PC-9 (cell line): ENCODE measurements at regions of chr7 and their contacts with region 1.

Region 1: GRCh38 chr7:78472519-78472918 is 673.9 kb downstream of the PHTF2 start:
- DNase-seq: no peak
- H3K4me3 ChIP-seq: no peak overlapping the region
- H3K27ac ChIP-seq: no peak overlapping the region
- H3K4me1 ChIP-seq: no peaks in the 10 kb centered on the region
- H3K27me3 ChIP-seq: no peaks in the 10 kb centered on the region
- CTCF ChIP-seq: no peak

Region 2: DNA sequence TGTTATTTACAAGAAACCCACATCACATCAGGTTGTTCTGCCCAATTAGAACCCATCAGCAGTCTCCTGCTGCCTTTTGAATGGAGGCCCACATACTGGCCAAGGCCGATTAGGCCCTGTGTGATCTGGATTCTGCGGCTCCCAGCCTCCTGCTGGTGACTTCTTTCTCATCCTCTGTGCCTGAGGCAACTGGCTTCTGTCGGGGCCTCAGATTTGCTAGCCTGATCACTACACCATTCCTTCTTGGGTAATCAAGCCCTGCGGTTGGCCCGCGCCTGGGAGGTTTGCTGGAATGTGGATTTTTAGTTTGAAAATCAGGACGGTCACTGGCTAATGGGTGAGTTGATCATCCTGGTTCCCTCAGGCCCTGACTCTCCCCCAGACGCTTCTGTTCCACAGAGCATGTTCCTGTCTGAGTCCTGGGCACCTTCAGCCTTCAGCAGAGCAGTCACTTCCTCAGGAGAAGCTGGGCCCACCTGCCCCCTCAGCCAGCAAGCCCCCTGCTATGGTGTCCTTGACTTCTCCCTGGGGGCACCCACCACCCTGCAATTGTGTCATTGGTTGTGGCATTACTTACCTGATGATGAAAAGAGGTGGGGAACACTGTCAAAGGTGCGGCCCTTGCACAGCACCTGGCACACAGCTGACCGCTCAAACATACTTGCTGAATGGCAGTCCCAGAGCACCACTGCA is 466.3 kb before region 1 on chr7:
- CTCF ChIA-PET with region 1: no interaction called
- POLR2A ChIA-PET with region 1: interaction called, 32 read pairs
- intact Hi-C with region 1: no loop called
- DNase-seq: no peak
- H3K4me3 ChIP-seq: no peak overlapping the region
- H3K27ac ChIP-seq: no peak overlapping the region
- H3K4me1 ChIP-seq: no peaks in the 10 kb centered on the region
- H3K27me3 ChIP-seq: no peaks in the 10 kb centered on the region
- CTCF ChIP-seq: no peak

Region 3: GRCh38 chr7:78134256-78134655 is 338.3 kb before region 1 on chr7:
- CTCF ChIA-PET with region 1: no interaction called
- POLR2A ChIA-PET with region 1: no interaction called
- intact Hi-C with region 1: no loop called
- DNase-seq: peak in 1 of 2 experiments; percentile 10
- H3K4me3 ChIP-seq: no peak overlapping the region
- H3K27ac ChIP-seq: no peak overlapping the region
- H3K4me1 ChIP-seq: no peaks in the 10 kb centered on the region
- H3K27me3 ChIP-seq: peaks cover 9% of the 10 kb centered on the region; the same call in 1 of the 2 replicates
- CTCF ChIP-seq: peak; percentile 46